ENCODE measurements at regions of chr6 and their contacts with region 1.

Region 1: GRCh38 chr6:156828280-156828703 is 51.1 kb downstream of the ARID1B start:
- DNase-seq: peak; percentile 93
- H3K4me3 ChIP-seq: no peak overlapping the region
- H3K27ac ChIP-seq: peak overlapping the region; percentile 62
- H3K4me1 ChIP-seq: peaks cover 26% of the 10 kb centered on the region
- H3K27me3 ChIP-seq: no peaks in the 10 kb centered on the region
- CTCF ChIP-seq: no peak

Region 2: GRCh38 chr6:156876302-156876701 is 48.0 kb after region 1 on chr6:
- CTCF ChIA-PET with region 1: no interaction called
- dilution Hi-C with region 1: no loop called
- in situ Hi-C with region 1: no loop called
- intact Hi-C with region 1: no loop called
- DNase-seq: no peak
- H3K4me3 ChIP-seq: no peak overlapping the region
- H3K27ac ChIP-seq: no peak overlapping the region
- H3K4me1 ChIP-seq: no peaks in the 10 kb centered on the region
- H3K27me3 ChIP-seq: no peaks in the 10 kb centered on the region
- CTCF ChIP-seq: peak; percentile 13 to 44

Region 3: GRCh38 chr6:157221007-157221816 is 392.9 kb after region 1 on chr6:
- CTCF ChIA-PET with region 1: interaction called, 11 read pairs
- dilution Hi-C with region 1: no loop called
- in situ Hi-C with region 1: no loop called
- intact Hi-C with region 1: no loop called
- DNase-seq: peak; percentile 73
- H3K4me3 ChIP-seq: peak overlapping the region; percentile 33 to 50 (median 35)
- H3K27ac ChIP-seq: no peak overlapping the region
- H3K4me1 ChIP-seq: peaks cover 16% of the 10 kb centered on the region
- H3K27me3 ChIP-seq: no peaks in the 10 kb centered on the region
- CTCF ChIP-seq: peak in 1 of 2 donors; percentile 34

Measured in mammary epithelial cell (primary cell).